Activated CD4-positive, alpha-beta T cell treated with anti-CD3 and anti-CD28 coated beads for 36 hours (primary cell): ENCODE measurements at regions of chr15 and their contacts with region 1.

Region 1: DNA sequence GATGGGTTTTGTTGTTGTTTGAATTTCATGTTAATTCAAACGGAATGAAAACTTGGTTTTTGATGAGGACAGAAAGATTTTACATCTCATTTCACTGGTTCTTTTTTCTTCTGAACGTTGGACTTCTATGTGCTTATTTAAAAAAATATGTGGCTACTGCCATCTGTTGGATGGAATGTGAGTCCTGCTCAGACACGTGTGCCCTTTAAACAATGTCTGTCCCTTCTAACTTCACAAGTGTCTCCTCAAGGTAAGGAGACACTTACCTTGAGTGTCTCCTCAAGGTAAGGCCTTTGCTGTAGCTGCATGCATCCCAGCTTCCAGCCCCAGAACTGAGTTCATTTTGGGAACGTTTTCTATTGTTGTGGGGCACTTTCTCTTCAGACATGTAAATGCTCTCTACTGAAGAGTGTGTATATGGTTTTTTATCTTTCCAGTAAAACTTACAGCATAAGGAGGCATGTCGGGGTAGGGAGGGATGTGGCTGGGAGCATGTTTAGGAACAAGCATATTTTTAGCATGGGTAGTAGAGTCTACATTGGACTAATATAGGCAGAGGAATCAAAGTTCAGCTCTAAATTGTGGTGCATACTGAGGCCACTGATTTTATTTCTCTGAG is 63.1 kb upstream of the UBE3A start:
- DNase-seq: peak; percentile 15
- ATAC-seq: no peak
- H3K4me3 Mint-ChIP-seq: no peak overlapping the region
- H3K27ac Mint-ChIP-seq: no peak overlapping the region
- H3K4me1 Mint-ChIP-seq: no peaks in the 10 kb centered on the region
- H3K27me3 Mint-ChIP-seq: peaks cover 3% of the 10 kb centered on the region

Region 2: GRCh38 chr15:23642413-23643044 is 1859.4 kb before region 1 on chr15:
- CTCF ChIA-PET with region 1: interaction called, 3 read pairs
- POLR2A ChIA-PET with region 1: no interaction called
- intact Hi-C with region 1: loop called (anchors 1 to 5 kb)
- DNase-seq: peak; percentile 70
- ATAC-seq: peak; percentile 53
- H3K4me3 Mint-ChIP-seq: no peak overlapping the region
- H3K27ac Mint-ChIP-seq: no peak overlapping the region
- H3K4me1 Mint-ChIP-seq: no peaks in the 10 kb centered on the region
- H3K27me3 Mint-ChIP-seq: peaks cover 2% of the 10 kb centered on the region

Region 3: GRCh38 chr15:23648920-23649515 is 1852.9 kb before region 1 on chr15:
- CTCF ChIA-PET with region 1: no interaction called
- POLR2A ChIA-PET with region 1: no interaction called
- intact Hi-C with region 1: loop called in 1 of 2 experiments (anchors 5 kb)
- DNase-seq: peak; percentile 62
- ATAC-seq: no peak
- H3K4me3 Mint-ChIP-seq: no peak overlapping the region
- H3K27ac Mint-ChIP-seq: no peak overlapping the region
- H3K4me1 Mint-ChIP-seq: no peaks in the 10 kb centered on the region
- H3K27me3 Mint-ChIP-seq: peaks cover 8% of the 10 kb centered on the region

Region 4: GRCh38 chr15:24761704-24762302 is 740.1 kb before region 1 on chr15:
- CTCF ChIA-PET with region 1: no interaction called
- POLR2A ChIA-PET with region 1: no interaction called
- intact Hi-C with region 1: loop called in 1 of 2 experiments (anchors 5 kb)
- DNase-seq: no peak
- ATAC-seq: no peak
- H3K4me3 Mint-ChIP-seq: no peak overlapping the region
- H3K27ac Mint-ChIP-seq: no peak overlapping the region
- H3K4me1 Mint-ChIP-seq: peaks cover 3% of the 10 kb centered on the region
- H3K27me3 Mint-ChIP-seq: no peaks in the 10 kb centered on the region

Region 5: GRCh38 chr15:25136119-25136518 is 365.8 kb before region 1 on chr15:
- CTCF ChIA-PET with region 1: no interaction called
- POLR2A ChIA-PET with region 1: no interaction called
- intact Hi-C with region 1: loop called in 1 of 2 experiments (anchors 2 kb)
- DNase-seq: no peak
- ATAC-seq: no peak
- H3K4me3 Mint-ChIP-seq: no peak overlapping the region
- H3K27ac Mint-ChIP-seq: no peak overlapping the region
- H3K4me1 Mint-ChIP-seq: no peaks in the 10 kb centered on the region
- H3K27me3 Mint-ChIP-seq: no peaks in the 10 kb centered on the region

Region 6: GRCh38 chr15:25481207-25481859 is 20.6 kb before region 1 on chr15:
- CTCF ChIA-PET with region 1: no interaction called
- POLR2A ChIA-PET with region 1: no interaction called
- intact Hi-C with region 1: no loop called
- DNase-seq: peak; percentile 5
- ATAC-seq: no peak
- H3K4me3 Mint-ChIP-seq: no peak overlapping the region
- H3K27ac Mint-ChIP-seq: no peak overlapping the region
- H3K4me1 Mint-ChIP-seq: peaks cover 4% of the 10 kb centered on the region
- H3K27me3 Mint-ChIP-seq: peaks cover 13% of the 10 kb centered on the region

Region 7: GRCh38 chr15:25512957-25513356 is 11.0 kb after region 1 on chr15:
- CTCF ChIA-PET with region 1: no interaction called
- POLR2A ChIA-PET with region 1: no interaction called
- intact Hi-C with region 1: no loop called
- DNase-seq: no peak
- ATAC-seq: no peak
- H3K4me3 Mint-ChIP-seq: no peak overlapping the region
- H3K27ac Mint-ChIP-seq: no peak overlapping the region
- H3K4me1 Mint-ChIP-seq: no peaks in the 10 kb centered on the region
- H3K27me3 Mint-ChIP-seq: no peaks in the 10 kb centered on the region